Mammary epithelial cell (primary cell): ENCODE measurements at regions of chr3 and their contacts with region 1.

Region 1: DNA sequence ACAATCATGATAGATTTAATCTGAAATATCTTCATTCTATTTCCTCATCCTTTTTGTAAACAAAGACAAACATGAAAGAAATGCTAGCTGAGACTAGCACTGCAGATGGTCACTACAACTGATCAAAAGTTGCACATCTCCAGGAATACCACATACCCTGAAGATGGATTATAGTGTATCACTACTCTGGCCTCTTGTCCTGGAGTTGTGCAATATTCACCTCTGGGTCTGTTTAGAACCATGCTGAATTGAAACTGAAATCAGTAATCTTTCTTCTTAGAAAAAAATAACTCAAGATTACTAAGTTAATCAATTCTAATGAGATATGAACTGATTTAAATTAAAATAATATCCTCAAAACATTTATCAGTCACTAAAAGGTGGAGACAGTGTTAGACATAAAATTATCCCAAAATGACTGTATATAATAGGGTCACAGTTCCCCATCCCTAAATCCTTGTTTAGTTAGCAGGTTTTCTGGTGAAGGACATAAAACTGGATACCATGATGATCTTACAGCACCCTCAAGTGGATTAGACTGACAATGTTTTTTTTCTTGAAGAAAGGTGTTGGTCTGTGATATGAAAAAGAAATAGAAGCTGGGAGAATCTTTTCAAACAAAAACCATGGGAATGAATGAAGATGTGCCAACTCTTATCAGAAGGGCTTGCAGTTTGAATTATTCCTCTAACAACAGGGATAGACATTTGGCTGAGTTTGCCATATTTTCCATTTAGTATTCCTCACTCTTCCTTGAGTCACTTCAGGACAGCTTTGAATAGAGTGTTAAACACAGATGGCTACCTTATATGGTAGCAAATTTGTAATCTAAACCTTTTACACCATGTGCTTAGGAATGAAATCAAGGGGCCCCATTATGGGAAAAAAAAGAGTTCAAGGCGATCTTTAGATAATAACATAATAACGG is 7.1 kb upstream of the TTC14 start:
- DNase-seq: peak; percentile 56
- H3K4me3 ChIP-seq: no peak overlapping the region
- H3K27ac ChIP-seq: no peak overlapping the region
- H3K4me1 ChIP-seq: peaks cover 7% of the 10 kb centered on the region
- H3K27me3 ChIP-seq: no peaks in the 10 kb centered on the region
- CTCF ChIP-seq: peak; percentile 60 to 76

Region 2: DNA sequence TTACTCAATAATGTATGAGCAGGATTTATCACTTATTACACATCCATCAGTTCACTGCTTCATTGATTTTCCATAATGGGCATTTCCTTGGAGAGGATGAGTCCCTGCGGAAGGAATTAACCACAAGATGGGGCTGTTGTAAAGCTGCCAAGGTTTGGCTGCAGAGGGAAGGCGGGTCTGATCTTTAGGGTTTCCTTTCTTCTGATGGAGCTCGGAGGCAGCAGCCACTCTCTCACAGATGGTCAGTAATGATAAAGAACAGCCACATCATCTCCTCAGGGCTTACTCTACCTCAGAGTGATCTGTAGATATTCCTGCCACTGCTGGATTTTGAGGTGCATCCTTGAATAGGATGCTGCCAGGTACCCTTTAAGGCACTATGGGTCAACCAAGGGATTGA is 826.8 kb before region 1 on chr3:
- CTCF ChIA-PET with region 1: no interaction called
- dilution Hi-C with region 1: no loop called
- in situ Hi-C with region 1: no loop called
- intact Hi-C with region 1: loop called (anchors 1 kb)
- DNase-seq: peak; percentile 47
- H3K4me3 ChIP-seq: no peak overlapping the region
- H3K27ac ChIP-seq: no peak overlapping the region
- H3K4me1 ChIP-seq: no peaks in the 10 kb centered on the region
- H3K27me3 ChIP-seq: no peaks in the 10 kb centered on the region
- CTCF ChIP-seq: peak; percentile 61 to 73

Region 3: GRCh38 chr3:179929091-179929529 is 665.8 kb before region 1 on chr3:
- CTCF ChIA-PET with region 1: interaction called, 7 read pairs
- dilution Hi-C with region 1: no loop called
- in situ Hi-C with region 1: loop called (anchors 5 kb)
- intact Hi-C with region 1: loop called (anchors 1 kb)
- DNase-seq: peak; percentile 30
- H3K4me3 ChIP-seq: no peak overlapping the region
- H3K27ac ChIP-seq: no peak overlapping the region
- H3K4me1 ChIP-seq: no peaks in the 10 kb centered on the region
- H3K27me3 ChIP-seq: no peaks in the 10 kb centered on the region
- CTCF ChIP-seq: peak; percentile 78 to 81

Region 4: DNA sequence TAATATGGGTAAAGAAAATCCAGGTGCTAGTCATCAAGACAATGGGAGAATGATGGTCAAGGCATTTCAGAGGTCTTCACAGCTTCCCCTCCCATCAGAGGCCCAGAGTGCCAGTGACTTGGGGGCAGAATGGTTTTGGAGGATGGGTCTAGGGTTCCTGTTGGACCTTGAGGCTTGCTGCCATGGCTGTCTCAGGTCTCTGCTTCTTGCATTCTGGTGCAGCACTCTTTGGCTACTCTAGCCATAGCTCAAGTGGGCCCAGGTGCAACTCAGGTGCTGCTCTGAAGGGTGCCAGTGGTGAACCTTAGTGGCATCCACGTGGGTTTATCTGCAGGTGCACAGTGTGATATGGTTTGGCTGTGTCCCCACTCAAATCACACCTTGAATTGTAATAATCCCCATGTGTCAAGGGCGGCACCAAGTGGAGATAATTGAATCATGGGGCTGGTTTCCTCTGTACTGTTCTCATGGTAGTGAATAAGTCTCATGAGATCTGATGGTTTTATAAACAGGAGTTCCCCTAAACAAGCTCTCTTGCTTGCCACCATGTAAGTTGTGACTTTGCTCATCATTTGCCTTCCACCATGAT is 509.7 kb before region 1 on chr3:
- CTCF ChIA-PET with region 1: no interaction called
- dilution Hi-C with region 1: no loop called
- in situ Hi-C with region 1: loop called in 1 of 2 experiments (anchors 25 kb)
- intact Hi-C with region 1: no loop called
- DNase-seq: no peak
- H3K4me3 ChIP-seq: no peak overlapping the region
- H3K27ac ChIP-seq: no peak overlapping the region
- H3K4me1 ChIP-seq: no peaks in the 10 kb centered on the region
- H3K27me3 ChIP-seq: no peaks in the 10 kb centered on the region
- CTCF ChIP-seq: no peak

Region 5: GRCh38 chr3:180416111-180416594 is 178.7 kb before region 1 on chr3:
- CTCF ChIA-PET with region 1: no interaction called
- dilution Hi-C with region 1: no loop called
- in situ Hi-C with region 1: no loop called
- intact Hi-C with region 1: loop called (anchors 10 kb)
- DNase-seq: peak; percentile 92
- H3K4me3 ChIP-seq: no peak overlapping the region
- H3K27ac ChIP-seq: peak overlapping the region; percentile 89
- H3K4me1 ChIP-seq: peaks cover 52% of the 10 kb centered on the region
- H3K27me3 ChIP-seq: no peaks in the 10 kb centered on the region
- CTCF ChIP-seq: no peak

Region 6: DNA sequence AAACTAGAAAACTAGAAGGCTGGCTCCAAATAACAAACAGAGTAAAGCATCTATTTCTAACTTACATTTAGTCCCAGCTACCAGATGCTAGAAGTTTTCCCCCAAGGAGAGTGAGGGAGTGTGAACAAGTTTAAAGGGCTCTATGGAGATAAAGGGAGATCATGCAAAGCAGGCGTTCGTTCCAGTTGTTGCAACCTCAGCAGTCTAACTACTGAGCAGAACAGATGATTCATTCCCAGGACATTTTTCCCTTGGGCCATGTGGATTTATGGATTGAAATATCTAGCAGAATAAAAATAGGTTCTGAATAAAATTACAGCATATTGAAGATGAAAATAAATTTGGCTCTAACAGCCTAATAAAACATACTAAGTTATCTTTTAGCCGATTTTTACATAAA is 147.8 kb before region 1 on chr3:
- CTCF ChIA-PET with region 1: no interaction called
- dilution Hi-C with region 1: no loop called
- in situ Hi-C with region 1: no loop called
- intact Hi-C with region 1: no loop called
- DNase-seq: peak; percentile 62
- H3K4me3 ChIP-seq: no peak overlapping the region
- H3K27ac ChIP-seq: no peak overlapping the region
- H3K4me1 ChIP-seq: peaks cover 15% of the 10 kb centered on the region
- H3K27me3 ChIP-seq: no peaks in the 10 kb centered on the region
- CTCF ChIP-seq: no peak